Aorta (tissue), 5 donors: ENCODE measurements at regions of chr22 and their contacts with region 1.

Region 1: GRCh38 chr22:40666151-40666848 is 13.0 kb upstream of the MCHR1 start:
- DNase-seq: peak in 1 of 2 donors; percentile 88
- ATAC-seq: peak; percentile 84
- H3K4me3 ChIP-seq: no peak overlapping the region
- H3K27ac ChIP-seq: peak overlapping the region in 1 of 2 donors; percentile 50
- H3K4me1 ChIP-seq: no peaks in the 10 kb centered on the region
- H3K27me3 ChIP-seq: no peaks in the 10 kb centered on the region

Region 2: GRCh38 chr22:40603088-40603605 is 63.2 kb before region 1 on chr22:
- intact Hi-C with region 1: no loop called
- DNase-seq: no peak
- ATAC-seq: no peak
- H3K4me3 ChIP-seq: no peak overlapping the region
- H3K27ac ChIP-seq: no peak overlapping the region
- H3K4me1 ChIP-seq: peaks cover 4 to 11% of the 10 kb centered on the region in 2 donors
- H3K27me3 ChIP-seq: no peaks in the 10 kb centered on the region

Region 3: GRCh38 chr22:40618400-40618799 is 47.9 kb before region 1 on chr22:
- intact Hi-C with region 1: no loop called
- DNase-seq: no peak
- ATAC-seq: no peak
- H3K4me3 ChIP-seq: no peak overlapping the region
- H3K27ac ChIP-seq: no peak overlapping the region
- H3K4me1 ChIP-seq: no peaks in the 10 kb centered on the region
- H3K27me3 ChIP-seq: no peaks in the 10 kb centered on the region

Region 4: DNA sequence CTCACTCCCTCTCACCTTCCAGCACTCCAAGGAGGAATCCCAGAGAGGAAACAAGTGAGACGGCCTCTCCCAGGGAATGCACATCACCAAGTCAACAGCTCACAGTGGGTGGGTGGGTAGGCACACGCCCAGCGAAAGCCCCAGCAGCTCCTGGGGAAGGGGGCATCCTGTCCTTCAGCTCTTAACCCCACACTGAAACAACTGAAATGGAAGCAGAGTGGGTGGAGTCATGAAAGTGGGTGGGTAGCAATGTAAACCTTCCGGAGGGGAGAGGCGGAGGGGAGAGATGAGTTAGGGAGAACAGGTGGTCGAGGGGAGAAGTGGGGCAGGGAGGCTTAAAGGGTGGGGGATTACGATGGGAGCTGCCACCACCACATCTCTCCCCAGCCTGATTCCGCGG is 18.4 kb after region 1 on chr22:
- intact Hi-C with region 1: no loop called
- DNase-seq: no peak
- ATAC-seq: no peak
- H3K4me3 ChIP-seq: no peak overlapping the region
- H3K27ac ChIP-seq: no peak overlapping the region
- H3K4me1 ChIP-seq: no peaks in the 10 kb centered on the region
- H3K27me3 ChIP-seq: no peaks in the 10 kb centered on the region

Region 5: DNA sequence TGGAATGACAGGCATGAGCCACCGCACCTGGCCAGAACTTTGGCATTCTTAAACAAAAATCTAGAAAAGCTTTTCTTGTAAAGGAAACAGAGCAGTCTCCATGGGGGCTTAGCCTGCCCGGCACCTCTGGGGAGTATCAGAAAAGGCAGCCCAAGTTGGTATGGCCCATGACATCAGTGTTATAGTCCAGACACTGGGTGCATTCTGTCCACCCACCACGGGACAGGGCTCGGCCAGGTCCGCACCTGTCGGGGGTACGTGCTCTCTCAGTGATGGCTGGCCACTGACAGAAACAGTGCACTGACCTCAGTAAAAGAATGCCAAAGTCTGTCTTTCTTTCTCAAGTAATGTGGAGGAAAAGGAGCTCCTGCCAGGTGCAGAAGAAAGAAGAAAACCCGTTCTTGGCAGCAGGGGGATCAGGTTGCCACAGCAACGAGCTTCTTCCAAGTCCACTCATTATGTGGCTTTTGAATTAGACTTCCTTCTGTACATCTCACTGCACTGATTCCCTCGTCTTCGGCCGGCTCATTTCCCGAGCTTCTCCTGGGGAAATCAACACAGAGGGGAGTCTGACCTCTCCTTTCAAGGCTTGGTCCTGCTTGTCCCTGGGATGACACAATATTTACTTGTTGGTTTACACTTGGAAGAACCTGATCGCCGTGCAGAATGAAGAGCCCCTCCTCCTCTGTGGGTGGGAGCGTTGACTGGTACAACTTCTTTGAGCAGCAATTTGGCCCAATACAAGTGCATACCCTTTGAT is 48.1 kb after region 1 on chr22:
- intact Hi-C with region 1: loop called in 1 of 2 experiments (anchors 1 kb)
- DNase-seq: peak in 1 of 2 donors; percentile 58
- ATAC-seq: no peak
- H3K4me3 ChIP-seq: no peak overlapping the region
- H3K27ac ChIP-seq: no peak overlapping the region
- H3K4me1 ChIP-seq: no peaks in the 10 kb centered on the region
- H3K27me3 ChIP-seq: no peaks in the 10 kb centered on the region

Region 6: GRCh38 chr22:40791241-40791640 is 124.9 kb after region 1 on chr22:
- intact Hi-C with region 1: no loop called
- DNase-seq: no peak
- ATAC-seq: no peak
- H3K4me3 ChIP-seq: no peak overlapping the region
- H3K27ac ChIP-seq: no peak overlapping the region
- H3K4me1 ChIP-seq: no peaks in the 10 kb centered on the region
- H3K27me3 ChIP-seq: no peaks in the 10 kb centered on the region